ENCODE measurements at regions of chr1 and their contacts with region 1.

Region 1: DNA sequence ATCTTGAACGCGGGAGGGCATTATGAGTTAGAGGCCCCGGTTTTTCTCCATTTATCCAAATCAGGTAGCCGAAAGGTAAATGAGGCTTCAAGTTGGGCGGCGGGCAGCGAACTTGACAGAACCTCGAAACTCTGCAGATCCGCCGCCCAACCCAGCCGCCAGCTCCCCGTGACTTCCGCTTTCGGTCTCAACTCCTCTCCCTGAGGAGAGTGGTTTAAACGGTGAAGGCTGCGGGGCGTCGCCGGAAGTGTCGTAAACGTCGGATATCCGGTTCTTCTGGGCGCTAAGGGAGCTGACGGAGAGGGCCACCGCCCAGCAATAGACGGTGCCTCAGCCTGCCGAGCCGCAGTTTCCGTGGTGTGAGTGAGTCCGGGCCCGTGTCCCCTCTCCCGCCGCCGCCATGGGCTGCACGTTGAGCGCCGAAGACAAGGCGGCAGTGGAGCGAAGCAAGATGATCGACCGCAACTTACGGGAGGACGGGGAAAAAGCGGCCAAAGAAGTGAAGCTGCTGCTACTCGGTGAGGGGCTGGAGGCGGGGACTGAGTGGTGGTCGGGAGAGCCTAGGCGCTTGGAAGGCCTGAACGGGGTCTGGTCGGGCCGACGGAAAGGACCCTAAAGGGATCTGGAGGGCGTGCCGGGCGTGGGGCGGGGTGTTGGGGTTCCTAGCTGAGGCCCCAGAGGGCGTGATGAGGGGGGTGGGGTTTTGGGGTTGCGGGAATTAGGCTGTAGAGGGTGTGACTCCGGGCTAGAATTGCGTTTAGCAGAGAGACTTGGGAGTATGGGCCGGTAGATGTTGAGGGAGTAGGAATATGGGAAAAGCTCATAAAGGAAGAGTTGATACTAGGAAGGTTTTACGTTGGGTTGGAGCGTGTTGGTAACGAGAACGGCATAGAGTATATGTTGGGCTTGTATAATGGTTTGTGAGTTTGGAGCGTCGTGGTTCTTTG is at the start of gene GNAI3:
- DNase-seq: peak; percentile 94
- ATAC-seq: peak; percentile 88
- H3K4me3 Mint-ChIP-seq: peak within 1 kb of the TSS; percentile 85
- H3K27ac Mint-ChIP-seq: peak within 1 kb of the TSS; percentile 94
- H3K4me1 Mint-ChIP-seq: peaks cover 25% of the 10 kb centered on the region
- H3K27me3 Mint-ChIP-seq: no peaks in the 10 kb centered on the region; the same call in 1 of the 2 replicates
- CTCF ChIP-seq: no peak
- total RNA-seq, gene GNAI3: 7.1 to 7.2 TPM (median 7.1 TPM) in 3 replicates

Region 2: DNA sequence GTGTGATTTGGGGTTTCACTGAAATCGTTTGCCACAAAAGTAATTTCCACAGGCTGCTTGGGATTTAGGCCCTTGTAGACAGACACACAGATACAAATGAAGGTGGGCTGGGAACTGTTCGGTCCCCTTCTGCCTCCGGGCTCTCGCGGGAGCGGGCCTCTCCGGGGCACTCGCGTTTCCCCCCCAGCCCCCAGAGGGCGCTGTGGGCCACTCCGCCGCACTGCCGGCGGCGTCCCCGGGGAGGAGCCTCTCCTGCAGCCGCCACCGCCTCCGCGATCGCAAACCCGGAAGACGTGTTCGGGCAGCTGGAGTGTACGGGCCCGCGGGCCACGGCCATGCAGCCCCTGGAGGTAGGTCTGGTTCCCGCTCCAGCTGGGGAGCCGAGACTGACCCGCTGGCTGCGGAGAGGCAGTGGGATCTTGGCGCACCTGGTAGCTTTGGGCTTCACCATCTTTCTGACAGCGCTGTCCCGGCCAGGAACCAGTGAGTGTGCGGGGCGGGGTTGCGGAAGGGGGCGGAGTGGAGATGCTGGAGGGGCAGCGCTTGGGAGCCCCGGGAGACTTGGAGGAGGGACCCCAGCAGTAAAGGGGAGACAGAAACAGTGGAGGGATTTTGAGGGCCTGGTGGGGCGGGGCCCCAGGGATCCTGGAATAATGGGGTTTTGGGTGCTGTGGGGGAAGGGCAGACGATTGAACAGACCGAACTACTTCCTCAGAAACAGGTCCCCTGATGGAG is 54.6 kb before region 1 on chr1 and contains the start of gene CYB561D1:
- CTCF ChIA-PET with region 1: interaction called, 14 read pairs
- POLR2A ChIA-PET with region 1: interaction called, 3 read pairs
- DNase-seq: peak; percentile 90
- ATAC-seq: peak; percentile 81
- H3K4me3 Mint-ChIP-seq: peak within 1 kb of the TSS; percentile 90
- H3K27ac Mint-ChIP-seq: 0 out of 2 replicates have a peak within 1 kb of the TSS, but pooled peaks have one; percentile 60
- H3K4me1 Mint-ChIP-seq: peaks cover 22% of the 10 kb centered on the region
- H3K27me3 Mint-ChIP-seq: no peaks in the 10 kb centered on the region
- CTCF ChIP-seq: peak; percentile 84
- total RNA-seq, gene CYB561D1: 5.1 to 6.7 TPM (median 6.5 TPM) in 3 replicates

Region 3: DNA sequence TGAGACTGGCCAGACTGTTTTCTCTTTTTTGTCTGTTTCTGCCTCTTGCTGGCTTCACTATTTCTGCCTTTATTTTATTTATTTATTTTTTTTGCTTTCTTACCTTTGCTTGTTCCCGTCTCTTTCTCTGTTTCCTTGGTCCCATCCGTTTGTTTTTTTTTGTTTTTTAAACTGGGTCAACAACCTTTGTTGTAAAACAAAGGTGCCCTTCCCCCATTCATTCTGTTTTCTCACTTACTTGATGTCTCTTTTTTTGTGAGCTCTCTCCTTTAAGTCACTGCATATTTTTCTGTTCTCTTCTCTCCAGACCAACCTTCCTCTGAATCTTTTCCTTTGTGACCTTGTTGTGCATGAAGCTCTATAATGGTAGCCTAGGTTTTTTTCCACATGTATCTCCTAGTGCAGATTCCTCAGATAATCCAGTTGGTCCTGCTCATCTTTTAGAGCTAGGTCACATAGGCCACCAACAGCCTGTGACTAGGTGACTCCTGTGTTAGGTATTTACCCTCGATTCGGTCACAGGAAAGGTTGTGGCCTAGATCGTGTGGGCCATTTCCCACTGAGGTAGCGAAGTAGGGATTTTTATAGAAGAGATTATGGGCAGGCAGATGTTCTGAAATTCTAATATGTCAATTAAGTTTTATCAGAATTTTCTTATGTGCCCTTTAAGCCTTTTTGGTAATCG is 15.7 kb after region 1 on chr1:
- CTCF ChIA-PET with region 1: interaction called, 17 read pairs
- POLR2A ChIA-PET with region 1: interaction called, 12 read pairs
- DNase-seq: no peak
- ATAC-seq: peak; percentile 43
- H3K4me3 Mint-ChIP-seq: peak overlapping the region; percentile 46
- H3K27ac Mint-ChIP-seq: peak overlapping the region; percentile 94
- H3K4me1 Mint-ChIP-seq: peaks cover 51% of the 10 kb centered on the region
- H3K27me3 Mint-ChIP-seq: no peaks in the 10 kb centered on the region
- CTCF ChIP-seq: no peak

Region 4: DNA sequence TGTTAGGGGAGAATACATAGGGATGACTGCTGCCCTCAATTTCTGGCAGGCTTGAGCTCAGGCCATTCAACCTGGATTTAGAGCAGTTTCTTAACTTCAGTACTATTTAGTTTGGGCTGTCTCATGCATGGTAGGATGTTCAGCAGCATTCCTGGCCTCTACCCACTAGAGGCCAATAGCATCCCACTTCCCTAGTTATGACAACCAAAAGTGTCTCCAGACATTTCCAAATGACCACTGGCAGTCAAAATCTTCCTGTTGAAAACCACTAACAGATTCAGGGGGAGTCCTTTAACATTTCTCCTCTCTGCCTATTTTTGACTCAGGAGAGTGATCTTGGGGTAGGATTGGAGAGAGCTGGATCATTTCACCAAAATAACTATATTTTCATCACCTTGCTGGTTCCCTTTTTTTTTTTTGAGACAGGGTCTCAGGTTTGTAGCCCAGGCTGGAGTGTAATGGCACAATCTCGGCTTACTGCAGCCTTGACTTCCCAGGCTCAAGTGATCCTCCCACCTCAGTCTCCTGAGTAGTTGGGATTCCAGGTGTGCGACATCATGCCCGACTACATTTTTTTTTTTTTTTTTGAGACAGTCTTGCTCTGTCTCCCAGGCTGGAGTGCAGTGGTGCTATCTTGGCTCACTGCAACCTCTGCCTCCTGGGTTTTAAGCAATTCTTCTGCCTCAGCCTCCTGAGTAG is 62.2 kb after region 1 on chr1:
- CTCF ChIA-PET with region 1: interaction called, 10 read pairs
- POLR2A ChIA-PET with region 1: interaction called, 8 read pairs
- DNase-seq: no peak
- ATAC-seq: peak; percentile 46; the same call in 1 of the 2 replicates
- H3K4me3 Mint-ChIP-seq: no peak overlapping the region
- H3K27ac Mint-ChIP-seq: no peak overlapping the region
- H3K4me1 Mint-ChIP-seq: peaks cover 27% of the 10 kb centered on the region
- H3K27me3 Mint-ChIP-seq: no peaks in the 10 kb centered on the region
- CTCF ChIP-seq: no peak

Region 5: DNA sequence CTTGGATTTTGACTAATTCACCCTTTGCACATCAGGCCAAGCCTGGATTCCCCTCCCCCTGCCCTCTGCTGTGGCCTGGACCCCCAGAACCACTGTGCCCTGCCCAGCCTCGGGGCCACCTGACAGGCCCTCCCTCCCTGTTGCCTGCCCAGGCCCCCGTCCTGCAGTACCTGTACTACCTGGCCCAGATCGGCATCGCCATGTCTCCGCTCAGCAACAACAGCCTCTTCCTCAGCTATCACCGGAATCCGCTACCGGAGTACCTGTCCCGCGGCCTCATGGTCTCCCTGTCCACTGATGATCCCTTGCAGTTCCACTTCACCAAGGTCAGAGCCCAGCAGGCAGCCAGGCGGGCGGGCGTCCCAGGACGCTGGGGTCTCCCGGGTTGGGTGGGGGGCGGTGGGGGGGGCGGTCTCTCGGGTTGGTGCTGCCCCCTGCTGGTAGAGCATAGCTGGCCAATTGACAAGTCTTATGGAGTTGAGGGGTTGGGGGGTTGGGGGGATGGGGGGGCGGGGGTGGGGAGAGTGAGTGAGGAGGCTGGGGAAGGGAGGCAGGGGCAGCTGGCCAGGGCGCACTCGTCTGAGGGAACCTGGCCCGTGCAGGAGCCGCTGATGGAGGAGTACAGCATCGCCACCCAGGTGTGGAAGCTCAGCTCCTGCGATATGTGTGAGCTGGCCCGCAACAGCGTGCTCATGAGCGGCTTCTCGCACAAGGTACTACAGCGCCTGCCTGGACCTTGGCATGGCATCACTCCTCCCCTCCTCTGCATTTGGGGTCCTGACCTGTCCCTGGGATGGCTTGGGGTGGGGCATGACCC is 81.7 kb after region 1 on chr1:
- CTCF ChIA-PET with region 1: interaction called, 100 read pairs
- POLR2A ChIA-PET with region 1: interaction called, 3 read pairs
- DNase-seq: peak; percentile 67
- ATAC-seq: peak; percentile 23
- H3K4me3 Mint-ChIP-seq: no peak overlapping the region
- H3K27ac Mint-ChIP-seq: peak overlapping the region; percentile 57; the same call in 1 of the 2 replicates
- H3K4me1 Mint-ChIP-seq: peaks cover 17% of the 10 kb centered on the region
- H3K27me3 Mint-ChIP-seq: no peaks in the 10 kb centered on the region
- CTCF ChIP-seq: peak; percentile 56; the same call in 1 of the 2 replicates

Region 6: GRCh38 chr1:109773146-109773899 is 224.7 kb after region 1 on chr1:
- CTCF ChIA-PET with region 1: interaction called, 14 read pairs
- POLR2A ChIA-PET with region 1: interaction called, 4 read pairs
- DNase-seq: peak; percentile 73
- ATAC-seq: peak; percentile 83
- H3K4me3 Mint-ChIP-seq: no peak overlapping the region
- H3K27ac Mint-ChIP-seq: no peak overlapping the region
- H3K4me1 Mint-ChIP-seq: peaks cover 5% of the 10 kb centered on the region
- H3K27me3 Mint-ChIP-seq: peaks cover 7% of the 10 kb centered on the region
- CTCF ChIP-seq: peak; percentile 38; the same call in 1 of the 2 replicates